ENCODE measurements at regions of chr3 and their contacts with region 1.

Region 1: GRCh38 chr3:69051756-69052471 is at the start of gene TMF1:
- DNase-seq: peak; percentile 99
- ATAC-seq: peak; percentile 95
- H3K4me3 Mint-ChIP-seq: peak within 1 kb of the TSS; percentile 87
- H3K27ac Mint-ChIP-seq: peak within 1 kb of the TSS; percentile 90
- H3K4me1 Mint-ChIP-seq: peaks cover 41% of the 10 kb centered on the region
- H3K27me3 Mint-ChIP-seq: no peaks in the 10 kb centered on the region
- CTCF ChIP-seq: no peak
- total RNA-seq, gene TMF1: 38.9 to 42.1 TPM

Region 2: DNA sequence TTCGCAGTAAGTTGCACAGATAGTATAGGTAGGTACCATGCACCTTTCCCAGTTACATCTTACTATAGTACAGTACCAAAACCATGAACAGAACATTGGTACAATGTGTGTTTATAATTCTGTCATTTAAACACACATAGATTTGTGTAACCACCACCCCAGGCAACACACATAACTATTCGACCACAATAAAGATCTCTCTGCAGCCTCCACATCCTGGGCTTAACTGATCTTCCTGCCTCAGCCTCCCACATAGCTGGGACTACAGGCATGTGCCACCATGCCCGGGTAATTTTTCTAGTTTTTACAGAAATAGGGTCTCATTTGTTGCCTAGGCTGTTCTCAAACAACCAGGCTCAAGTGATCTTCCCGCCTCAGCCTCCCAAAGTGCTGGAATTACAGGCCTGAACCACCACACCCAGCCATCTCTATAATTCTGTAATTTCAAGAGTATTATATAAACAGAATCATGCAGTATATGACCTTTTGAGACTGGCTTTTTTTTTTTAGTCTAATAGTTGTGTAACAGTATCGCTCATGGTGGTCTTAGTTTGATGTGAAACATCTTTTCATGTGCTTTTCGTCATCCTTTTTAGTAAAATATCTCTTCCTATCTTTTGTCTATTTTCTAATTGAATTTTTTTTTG is 13.5 kb after region 1 on chr3:
- CTCF ChIA-PET with region 1: interaction called, 15 read pairs
- POLR2A ChIA-PET with region 1: interaction called, 24 read pairs
- intact Hi-C with region 1: no loop called
- DNase-seq: no peak
- ATAC-seq: peak; percentile 85
- H3K4me3 Mint-ChIP-seq: no peak overlapping the region
- H3K27ac Mint-ChIP-seq: peak overlapping the region; percentile 80
- H3K4me1 Mint-ChIP-seq: peaks cover 35% of the 10 kb centered on the region
- H3K27me3 Mint-ChIP-seq: no peaks in the 10 kb centered on the region
- CTCF ChIP-seq: no peak

Region 3: GRCh38 chr3:69084326-69085167 is 32.6 kb after region 1 on chr3 and contains the start of gene ARL6IP5:
- CTCF ChIA-PET with region 1: interaction called, 11 read pairs
- POLR2A ChIA-PET with region 1: interaction called, 16 read pairs
- intact Hi-C with region 1: loop called (anchors 2 kb)
- DNase-seq: peak; percentile 97
- ATAC-seq: peak; percentile 54
- H3K4me3 Mint-ChIP-seq: peak within 1 kb of the TSS; percentile 99
- H3K27ac Mint-ChIP-seq: peak within 1 kb of the TSS; percentile 98
- H3K4me1 Mint-ChIP-seq: peaks cover 58% of the 10 kb centered on the region
- H3K27me3 Mint-ChIP-seq: no peaks in the 10 kb centered on the region
- CTCF ChIP-seq: no peak
- total RNA-seq, gene ARL6IP5: 72.7 to 74.2 TPM

Region 4: GRCh38 chr3:69092030-69092516 is 40.2 kb after region 1 on chr3:
- CTCF ChIA-PET with region 1: interaction called, 5 read pairs
- POLR2A ChIA-PET with region 1: interaction called, 16 read pairs
- intact Hi-C with region 1: no loop called
- DNase-seq: peak; percentile 43
- ATAC-seq: peak; percentile 75
- H3K4me3 Mint-ChIP-seq: peak overlapping the region; percentile 70
- H3K27ac Mint-ChIP-seq: peak overlapping the region; percentile 96
- H3K4me1 Mint-ChIP-seq: peaks cover 85% of the 10 kb centered on the region
- H3K27me3 Mint-ChIP-seq: no peaks in the 10 kb centered on the region
- CTCF ChIP-seq: no peak

Region 5: DNA sequence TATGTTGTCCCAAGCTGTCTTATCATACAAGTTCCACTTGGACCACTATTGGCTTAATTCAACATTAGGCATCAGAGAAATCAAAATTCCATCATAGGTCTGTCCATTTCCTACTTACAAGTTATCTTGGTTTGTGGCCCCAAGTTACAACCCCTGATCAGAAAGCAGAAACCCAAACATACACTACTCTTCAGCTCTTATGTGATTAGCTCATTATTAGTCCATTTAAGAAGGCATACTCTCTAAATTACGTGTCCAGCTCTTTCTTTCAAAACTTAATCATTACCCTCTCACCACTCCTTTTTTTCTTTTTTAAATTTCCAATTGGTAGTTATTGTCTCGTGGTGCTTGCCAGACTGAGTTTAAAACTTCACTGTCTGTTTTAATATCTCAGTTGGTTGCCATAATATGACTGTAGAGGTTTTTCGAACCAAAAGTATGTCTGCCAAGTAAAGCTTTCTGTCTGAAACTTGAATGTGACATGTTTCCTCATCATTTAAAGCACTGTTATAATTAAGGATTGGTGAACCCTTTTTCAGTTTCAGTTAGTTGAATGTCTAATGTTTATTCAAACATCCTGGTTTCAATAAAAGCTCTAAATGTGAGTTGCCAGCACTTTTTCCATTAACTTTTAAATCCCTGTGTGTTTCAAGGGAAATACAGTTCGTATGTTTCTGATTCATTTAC is 1097.9 kb after region 1 on chr3:
- CTCF ChIA-PET with region 1: no interaction called
- POLR2A ChIA-PET with region 1: no interaction called
- intact Hi-C with region 1: no loop called
- DNase-seq: no peak
- ATAC-seq: no peak
- H3K4me3 Mint-ChIP-seq: no peak overlapping the region
- H3K27ac Mint-ChIP-seq: no peak overlapping the region
- H3K4me1 Mint-ChIP-seq: no peaks in the 10 kb centered on the region
- H3K27me3 Mint-ChIP-seq: no peaks in the 10 kb centered on the region
- CTCF ChIP-seq: no peak